HepG2 (cell line): ENCODE measurements at regions of chr20 and their contacts with region 1.

Region 1: DNA sequence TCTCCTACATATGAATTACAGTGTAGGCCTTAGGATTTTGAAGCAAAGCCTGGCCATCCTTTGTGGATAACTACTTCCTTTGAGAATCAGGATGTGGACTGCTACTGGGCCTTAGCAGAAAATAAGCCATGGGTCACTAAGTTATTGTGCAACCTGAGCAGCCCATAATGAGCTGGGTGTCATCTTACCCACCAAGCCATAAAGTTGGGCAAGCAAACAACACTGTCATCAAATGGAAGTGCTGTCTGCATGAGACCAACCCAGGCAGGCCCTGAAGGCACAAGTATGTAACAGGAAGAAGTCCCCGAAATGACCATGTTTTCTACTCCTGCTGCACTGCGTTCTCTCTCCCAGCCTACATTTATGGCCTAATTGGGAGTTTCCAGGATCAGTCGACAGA is 205.6 kb upstream of the GGTLC1 start:
- DNase-seq: no peak
- ATAC-seq: no peak
- H3K4me3 ChIP-seq: no peak overlapping the region
- H3K27ac ChIP-seq: no peak overlapping the region
- H3K4me1 ChIP-seq: no peaks in the 10 kb centered on the region
- H3K27me3 ChIP-seq: no peaks in the 10 kb centered on the region
- CTCF ChIP-seq: no peak
- EP300 ChIP-seq: no peak
- POLR2A ChIP-seq: no peak
- RAD21 ChIP-seq: no peak

Region 2: GRCh38 chr20:23920417-23921325 is 273.5 kb before region 1 on chr20:
- CTCF ChIA-PET with region 1: no interaction called
- POLR2A ChIA-PET with region 1: no interaction called
- in situ Hi-C with region 1: no loop called
- intact Hi-C with region 1: no loop called
- DNase-seq: no peak
- ATAC-seq: no peak
- H3K4me3 ChIP-seq: no peak overlapping the region
- H3K27ac ChIP-seq: no peak overlapping the region
- H3K4me1 ChIP-seq: no peaks in the 10 kb centered on the region
- H3K27me3 ChIP-seq: peaks cover 0 to 4% of the 10 kb centered on the region in 2 experiments; a peak in 3 of 5 replicates
- CTCF ChIP-seq: no peak
- EP300 ChIP-seq: no peak
- POLR2A ChIP-seq: no peak
- RAD21 ChIP-seq: no peak

Region 3: GRCh38 chr20:24160563-24161375 is 33.4 kb before region 1 on chr20:
- CTCF ChIA-PET with region 1: no interaction called
- POLR2A ChIA-PET with region 1: no interaction called
- in situ Hi-C with region 1: no loop called
- intact Hi-C with region 1: no loop called
- DNase-seq: peak; percentile 39
- ATAC-seq: peak; percentile 94
- H3K4me3 ChIP-seq: no peak overlapping the region
- H3K27ac ChIP-seq: no peak overlapping the region
- H3K4me1 ChIP-seq: no peaks in the 10 kb centered on the region
- H3K27me3 ChIP-seq: no peaks in the 10 kb centered on the region
- CTCF ChIP-seq: peak; percentile 83
- EP300 ChIP-seq: no peak
- POLR2A ChIP-seq: no peak
- RAD21 ChIP-seq: 0 out of 2 replicates have a peak, but pooled peaks have one; percentile 33

Region 4: DNA sequence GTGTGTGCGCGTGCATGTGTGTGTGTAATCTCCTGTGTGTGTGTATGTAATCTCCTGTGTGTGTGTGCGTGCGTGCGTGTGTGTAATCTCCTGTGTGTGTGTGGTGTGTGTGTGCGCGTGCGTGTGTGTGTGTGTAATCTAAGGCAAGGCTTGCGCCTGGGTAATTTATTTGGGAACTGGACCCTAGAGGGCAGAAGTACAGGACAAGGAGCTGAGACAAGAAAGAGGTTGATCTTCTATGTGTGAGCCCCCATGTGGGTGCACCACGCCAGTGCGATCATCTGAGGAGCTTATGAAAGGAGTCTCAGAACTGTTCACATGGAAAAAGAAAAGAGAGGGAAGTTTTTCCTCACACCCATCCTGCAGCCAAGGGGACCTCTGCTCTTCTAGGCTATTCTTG is 14.5 kb after region 1 on chr20:
- CTCF ChIA-PET with region 1: no interaction called
- POLR2A ChIA-PET with region 1: no interaction called
- in situ Hi-C with region 1: no loop called
- intact Hi-C with region 1: no loop called
- DNase-seq: peak; percentile 28
- ATAC-seq: peak; percentile 80
- H3K4me3 ChIP-seq: no peak overlapping the region
- H3K27ac ChIP-seq: no peak overlapping the region
- H3K4me1 ChIP-seq: no peaks in the 10 kb centered on the region
- H3K27me3 ChIP-seq: no peaks in the 10 kb centered on the region
- CTCF ChIP-seq: no peak
- EP300 ChIP-seq: no peak
- POLR2A ChIP-seq: no peak
- RAD21 ChIP-seq: no peak

Region 5: GRCh38 chr20:24235296-24236175 is 41.4 kb after region 1 on chr20:
- CTCF ChIA-PET with region 1: no interaction called
- POLR2A ChIA-PET with region 1: no interaction called
- in situ Hi-C with region 1: no loop called
- intact Hi-C with region 1: no loop called
- DNase-seq: no peak
- ATAC-seq: no peak
- H3K4me3 ChIP-seq: no peak overlapping the region
- H3K27ac ChIP-seq: no peak overlapping the region
- H3K4me1 ChIP-seq: no peaks in the 10 kb centered on the region
- H3K27me3 ChIP-seq: 0 out of 5 replicates have a peak, but pooled peaks cover 0 to 4% of the 10 kb centered on the region in 2 experiments
- CTCF ChIP-seq: no peak
- EP300 ChIP-seq: no peak
- POLR2A ChIP-seq: no peak
- RAD21 ChIP-seq: no peak

Region 6: GRCh38 chr20:24257171-24257570 is 63.0 kb after region 1 on chr20:
- CTCF ChIA-PET with region 1: no interaction called
- POLR2A ChIA-PET with region 1: no interaction called
- in situ Hi-C with region 1: loop called (anchors 10 kb)
- intact Hi-C with region 1: no loop called
- DNase-seq: no peak
- ATAC-seq: no peak
- H3K4me3 ChIP-seq: no peak overlapping the region
- H3K27ac ChIP-seq: no peak overlapping the region
- H3K4me1 ChIP-seq: no peaks in the 10 kb centered on the region
- H3K27me3 ChIP-seq: peaks cover 0 to 2% of the 10 kb centered on the region in 2 experiments; a peak in 1 of 5 replicates
- CTCF ChIP-seq: no peak
- EP300 ChIP-seq: no peak
- POLR2A ChIP-seq: no peak
- RAD21 ChIP-seq: no peak